Left cardiac atrium (tissue), 4 donors: ENCODE measurements at regions of chr16 and their contacts with region 1.

Region 1: GRCh38 chr16:64711026-64711425 is 410.8 kb downstream of the CDH11 start:
- DNase-seq: no peak
- ATAC-seq: no peak

Region 2: GRCh38 chr16:64513871-64514270 is 197.2 kb before region 1 on chr16:
- intact Hi-C with region 1: loop called in 1 of 2 experiments (anchors 10 kb)
- DNase-seq: no peak
- ATAC-seq: no peak

Region 3: DNA sequence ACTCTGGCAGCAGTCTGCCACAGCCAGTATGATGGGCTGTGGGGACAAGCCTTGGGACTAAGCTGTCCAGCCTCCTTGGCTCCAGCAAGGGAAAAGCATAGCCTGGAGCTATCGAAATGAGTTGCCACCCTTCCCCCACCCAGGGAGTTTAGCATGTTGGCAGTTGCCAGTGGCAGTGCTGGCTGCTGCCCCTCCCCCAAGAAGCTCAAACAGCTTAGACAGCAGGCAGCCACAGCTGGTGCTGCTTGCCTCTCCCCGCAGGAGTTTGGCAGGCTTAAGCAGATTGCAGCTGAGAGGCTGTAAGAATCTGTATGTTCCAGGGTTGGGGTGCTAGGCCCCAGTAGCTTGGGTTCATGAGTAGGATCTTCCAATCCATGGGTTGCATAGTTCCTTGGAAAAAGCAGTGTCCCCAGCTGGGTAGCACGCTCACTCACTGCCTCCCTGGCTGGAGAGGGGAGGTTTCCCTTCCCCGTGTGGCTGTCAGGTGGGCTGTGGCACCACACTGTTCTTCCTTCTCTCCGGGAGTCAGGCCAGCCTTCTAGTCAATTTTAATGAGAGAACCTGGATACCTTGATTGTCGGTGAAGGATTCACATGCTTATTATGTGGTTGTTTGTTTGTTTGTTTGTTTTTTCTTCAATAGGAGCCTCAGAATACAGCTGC is 95.3 kb before region 1 on chr16:
- intact Hi-C with region 1: no loop called
- DNase-seq: no peak
- ATAC-seq: peak; percentile 35 to 53